GM12878 (cell line): ENCODE measurements at regions of chr12 and their contacts with region 1.

Region 1: GRCh38 chr12:68844788-68845695 is 37.1 kb downstream of the MDM2 start:
- DNase-seq: no peak
- ATAC-seq: peak; percentile 20
- H3K4me3 ChIP-seq: no peak overlapping the region
- H3K27ac ChIP-seq: no peak overlapping the region
- H3K4me1 ChIP-seq: no peaks in the 10 kb centered on the region
- H3K27me3 ChIP-seq: no peaks in the 10 kb centered on the region
- CTCF ChIP-seq: no peak
- EP300 ChIP-seq: no peak
- POLR2A ChIP-seq: no peak
- RAD21 ChIP-seq: no peak

Region 2: DNA sequence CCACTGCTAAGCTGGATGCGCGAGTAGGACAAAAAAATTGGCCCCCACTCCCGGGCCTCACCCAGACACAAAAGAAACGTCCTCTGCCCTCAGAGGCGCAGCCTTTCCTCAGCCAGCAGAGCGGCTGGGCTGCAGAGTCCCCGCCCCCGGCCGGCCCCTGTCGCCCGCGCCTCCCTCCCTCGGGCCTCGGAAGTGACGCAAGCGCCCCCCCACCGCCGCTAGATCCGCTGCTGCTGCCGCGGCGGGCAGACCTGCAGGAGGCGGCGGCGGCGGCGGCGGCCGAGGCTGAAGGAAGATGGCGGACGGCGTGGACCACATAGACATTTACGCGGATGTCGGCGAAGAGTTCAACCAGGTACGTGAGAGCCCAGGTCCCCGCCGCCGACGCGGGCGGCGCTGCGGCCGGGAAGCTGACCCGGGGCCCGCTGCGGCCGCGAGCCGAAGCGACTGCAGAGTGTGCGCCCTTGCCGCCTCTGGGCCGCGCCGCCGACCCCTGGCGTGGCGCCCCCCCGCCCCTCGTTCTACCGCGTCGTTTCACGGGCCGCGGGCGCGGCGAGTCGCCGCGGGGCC is 394.4 kb after region 1 on chr12 and contains the start of gene CPSF6:
- CTCF ChIA-PET with region 1: no interaction called
- POLR2A ChIA-PET with region 1: no interaction called
- RAD21 ChIA-PET with region 1: no interaction called
- SMC1A ChIA-PET with region 1: no interaction called
- in situ Hi-C with region 1: no loop called
- intact Hi-C with region 1: loop called (anchors 10 kb)
- DNase-seq: peak; percentile 62
- ATAC-seq: peak; percentile 89
- H3K4me3 ChIP-seq: peak within 1 kb of the TSS; percentile 98
- H3K27ac ChIP-seq: peak within 1 kb of the TSS; percentile 81
- H3K4me1 ChIP-seq: peaks cover 14% of the 10 kb centered on the region
- H3K27me3 ChIP-seq: no peaks in the 10 kb centered on the region
- CTCF ChIP-seq: no peak
- EP300 ChIP-seq: no peak
- POLR2A ChIP-seq: peak; percentile 91
- RAD21 ChIP-seq: no peak
- polyA plus RNA-seq, gene CPSF6: 45.9 to 49.2 TPM